SK-N-SH (cell line): ENCODE measurements at regions of chr17 and their contacts with region 1.

Region 1: GRCh38 chr17:43907425-43907981 is at the start of gene MPP2:
- DNase-seq: peak; percentile 86
- H3K4me3 ChIP-seq: peak within 1 kb of the TSS; percentile 66 to 91
- H3K27ac ChIP-seq: peak within 1 kb of the TSS; percentile 24 to 91; a peak in 3 of 4 replicates
- H3K4me1 ChIP-seq: peaks cover 9 to 16% of the 10 kb centered on the region in 2 experiments; a peak in 2 of 4 replicates
- H3K27me3 ChIP-seq: peaks cover 7% of the 10 kb centered on the region; the same call in 1 of the 2 replicates
- CTCF ChIP-seq: peak; percentile 20; the same call in 1 of the 2 replicates
- EP300 ChIP-seq: no peak
- RAD21 ChIP-seq: no peak
- polyA plus RNA-seq, gene MPP2: 8.1 and 8.3 TPM in 2 replicates

Region 2: DNA sequence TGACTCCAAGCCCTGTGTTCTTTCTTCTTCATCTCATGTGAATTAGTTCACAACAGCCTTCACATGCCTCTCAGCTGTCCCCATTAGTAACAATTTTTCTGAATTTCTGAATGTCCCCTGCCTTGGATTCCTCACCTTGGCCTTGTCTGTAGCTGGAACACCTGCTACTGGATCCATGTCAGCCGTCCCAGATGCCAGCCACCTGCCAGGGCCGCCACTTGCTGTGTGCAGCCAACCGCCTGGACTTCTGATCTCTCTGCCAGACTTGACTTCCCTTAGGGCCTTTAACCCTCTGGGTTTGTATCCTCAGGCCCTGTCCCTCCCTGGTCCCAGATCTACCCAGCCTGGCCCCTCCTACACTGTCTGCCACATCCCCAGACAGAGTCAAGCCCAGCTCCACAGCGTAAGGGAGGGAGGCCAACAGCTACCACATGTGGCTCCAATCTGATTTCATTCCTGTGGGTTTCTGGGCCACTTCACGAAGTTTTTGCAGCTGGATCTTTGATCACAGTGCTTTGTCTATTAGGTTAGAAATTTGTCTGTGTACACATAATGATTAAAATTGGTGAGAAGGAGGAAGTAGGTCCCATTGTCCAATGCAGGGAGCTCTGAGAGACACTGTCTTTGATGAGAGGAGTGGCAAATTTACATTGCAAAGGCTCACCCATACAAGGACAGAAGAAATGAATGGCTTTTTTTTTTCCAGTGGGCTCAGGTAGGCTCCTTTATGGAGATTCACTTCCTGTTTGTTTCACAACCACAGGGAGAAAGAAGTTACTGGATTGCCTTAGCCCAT is 15.5 kb before region 1 on chr17:
- CTCF ChIA-PET with region 1: interaction called, 10 read pairs
- POLR2A ChIA-PET with region 1: no interaction called
- DNase-seq: no peak
- H3K4me3 ChIP-seq: no peak overlapping the region
- H3K27ac ChIP-seq: no peak overlapping the region
- H3K4me1 ChIP-seq: peaks cover 0 to 9% of the 10 kb centered on the region in 2 experiments; a peak in 1 of 4 replicates
- H3K27me3 ChIP-seq: no peaks in the 10 kb centered on the region
- CTCF ChIP-seq: no peak
- EP300 ChIP-seq: no peak
- RAD21 ChIP-seq: no peak

Region 3: GRCh38 chr17:43927060-43927864 is 19.8 kb after region 1 on chr17:
- CTCF ChIA-PET with region 1: interaction called, 60 read pairs
- POLR2A ChIA-PET with region 1: no interaction called
- DNase-seq: no peak
- H3K4me3 ChIP-seq: no peak overlapping the region
- H3K27ac ChIP-seq: no peak overlapping the region
- H3K4me1 ChIP-seq: no peaks in the 10 kb centered on the region; a peak in 1 of 4 replicates
- H3K27me3 ChIP-seq: peaks cover 14% of the 10 kb centered on the region; the same call in 1 of the 2 replicates
- CTCF ChIP-seq: no peak
- EP300 ChIP-seq: no peak
- RAD21 ChIP-seq: no peak